AG04450 (cell line): ENCODE measurements at regions of chr6 and their contacts with region 1.

Region 1: GRCh38 chr6:33299237-33299944 is 649 bp upstream of the RGL2 start:
- DNase-seq: peak; percentile 77
- H3K4me3 ChIP-seq: peak overlapping the region; percentile 91
- H3K27ac ChIP-seq: peak overlapping the region; percentile 98
- H3K27me3 ChIP-seq: no peaks in the 10 kb centered on the region
- CTCF ChIP-seq: peak; percentile 79

Region 2: DNA sequence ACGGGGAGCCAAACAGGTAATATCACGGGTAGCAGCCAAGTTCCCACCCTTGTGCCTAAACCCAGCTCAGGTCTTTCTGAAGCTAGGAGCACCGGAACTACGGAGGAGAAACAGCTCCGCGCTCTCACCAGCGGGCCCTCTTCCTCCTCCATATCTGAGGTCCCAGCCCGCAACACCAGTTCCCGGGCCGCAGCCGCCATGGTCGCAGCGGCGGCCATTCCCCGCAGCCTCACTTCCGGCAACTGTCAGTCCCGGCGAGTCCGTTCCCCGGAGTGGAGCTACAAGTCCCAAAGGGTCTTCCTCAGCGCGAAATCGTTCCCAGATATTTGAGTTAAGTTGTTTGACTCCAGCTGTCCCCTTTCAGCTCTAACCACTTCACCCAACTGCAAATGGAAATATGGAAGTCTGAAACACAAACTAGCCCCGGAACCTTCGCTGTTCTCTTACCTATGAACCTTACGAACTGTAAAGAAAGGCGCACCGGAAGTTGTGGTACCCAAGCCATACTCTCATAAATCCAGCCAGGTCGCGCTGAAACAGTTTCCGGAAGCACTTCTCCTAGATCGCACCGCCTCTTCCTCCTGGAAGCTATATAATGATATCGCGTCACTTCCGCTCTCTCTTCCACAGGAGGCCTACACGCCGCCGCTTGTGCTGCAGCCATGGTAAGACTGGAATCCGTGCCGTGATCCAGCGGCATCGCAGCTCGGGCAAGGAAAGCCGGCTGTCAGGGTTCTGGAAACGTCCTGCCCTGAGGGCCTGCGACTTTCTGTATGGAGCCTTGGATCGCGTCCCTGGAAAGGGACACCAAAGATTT is 27.7 kb before region 1 on chr6 and contains the starts of genes RPS18 and VPS52:
- CTCF ChIA-PET with region 1: interaction called, 4 read pairs
- POLR2A ChIA-PET with region 1: interaction called, 12 read pairs
- DNase-seq: peak; percentile 98
- H3K4me3 ChIP-seq: peak within 1 kb of the TSS; percentile 94
- H3K27ac ChIP-seq: peak within 1 kb of the TSS; percentile 94
- H3K27me3 ChIP-seq: no peaks in the 10 kb centered on the region
- CTCF ChIP-seq: no peak
- polyA plus RNA-seq, gene RPS18: 5,380 and 5,823 TPM in 2 replicates
- polyA plus RNA-seq, gene VPS52: 58.0 and 60.4 TPM in 2 replicates

Region 3: DNA sequence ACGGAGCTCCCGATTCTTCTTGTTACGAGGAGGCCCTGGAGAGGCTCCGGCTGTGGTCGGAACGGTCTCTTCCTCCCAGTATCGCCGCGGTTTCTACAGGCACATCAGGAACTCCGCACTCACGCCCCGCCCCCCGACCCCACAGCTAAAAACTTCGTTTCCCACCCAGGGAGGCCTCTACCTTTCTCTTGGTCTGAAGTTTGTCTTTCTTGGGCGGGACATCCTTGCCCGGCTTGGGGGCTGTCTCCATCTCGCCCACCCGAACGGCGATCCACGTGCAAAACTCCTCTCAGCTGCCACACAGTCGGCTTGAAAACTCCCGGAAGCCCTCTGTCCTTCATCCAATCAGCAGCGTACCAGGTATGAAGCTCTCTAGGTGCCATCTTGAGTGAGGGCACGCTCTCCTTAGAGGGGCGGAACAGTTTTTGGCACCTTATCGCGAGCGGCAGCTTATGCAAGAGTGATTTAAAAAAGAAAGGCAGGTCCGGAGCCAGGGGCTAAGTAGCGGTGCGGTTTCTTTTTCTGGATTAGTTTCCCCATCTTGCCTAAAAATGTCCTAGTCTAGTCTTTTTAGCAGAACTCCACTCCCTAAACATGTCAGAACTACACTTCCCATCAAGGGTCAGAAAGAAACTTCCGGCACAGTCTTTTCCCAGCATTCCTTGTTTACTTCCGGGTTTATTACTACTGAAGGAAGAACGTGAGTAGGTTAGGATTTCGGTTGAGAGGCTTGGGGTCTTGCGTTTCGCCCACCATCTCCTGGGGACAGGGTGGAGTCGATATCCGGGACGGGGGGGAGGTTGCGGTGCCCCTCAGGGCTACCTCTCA is 10.3 kb before region 1 on chr6 and contains the starts of genes PFDN6 and WDR46:
- CTCF ChIA-PET with region 1: interaction called, 5 read pairs
- POLR2A ChIA-PET with region 1: interaction called, 11 read pairs
- DNase-seq: peak; percentile 60
- H3K4me3 ChIP-seq: peak within 1 kb of the TSS; percentile 89
- H3K27ac ChIP-seq: peak within 1 kb of the TSS; percentile 39
- H3K27me3 ChIP-seq: no peaks in the 10 kb centered on the region
- CTCF ChIP-seq: no peak
- polyA plus RNA-seq, gene PFDN6: 59.6 and 64.6 TPM in 2 replicates
- polyA plus RNA-seq, gene WDR46: 43.3 and 44.7 TPM in 2 replicates

Region 4: GRCh38 chr6:33317669-33318425 is 18.5 kb after region 1 on chr6 and contains the start of gene ZBTB22:
- CTCF ChIA-PET with region 1: interaction called, 14 read pairs
- POLR2A ChIA-PET with region 1: interaction called, 14 read pairs
- DNase-seq: peak; percentile 98
- H3K4me3 ChIP-seq: peak within 1 kb of the TSS; percentile 78
- H3K27ac ChIP-seq: peak within 1 kb of the TSS; percentile 72
- H3K27me3 ChIP-seq: no peaks in the 10 kb centered on the region
- CTCF ChIP-seq: no peak
- polyA plus RNA-seq, gene ZBTB22: 8.4 and 11.8 TPM in 2 replicates

Region 5: GRCh38 chr6:33652002-33652401 is 352.6 kb after region 1 on chr6:
- CTCF ChIA-PET with region 1: no interaction called
- POLR2A ChIA-PET with region 1: interaction called, 11 read pairs
- DNase-seq: no peak
- H3K4me3 ChIP-seq: no peak overlapping the region
- H3K27ac ChIP-seq: no peak overlapping the region
- H3K27me3 ChIP-seq: no peaks in the 10 kb centered on the region
- CTCF ChIP-seq: no peak